CD8-positive, alpha-beta T cell (primary cell): ENCODE measurements at regions of chr2 and their contacts with region 1.

Region 1: GRCh38 chr2:86783615-86784339 is 6.9 kb downstream of the CD8A start:
- DNase-seq: peak in 4 of 9 experiments; percentile 45 to 79 (median 54)
- ATAC-seq: peak; percentile 8
- H3K4me3 ChIP-seq: no peak overlapping the region
- H3K4me3 Mint-ChIP-seq: peak overlapping the region; percentile 48
- H3K27ac ChIP-seq: peak overlapping the region; percentile 93 to 99
- H3K27ac Mint-ChIP-seq: peak overlapping the region; percentile 99
- H3K4me1 ChIP-seq: peaks cover 74% of the 10 kb centered on the region
- H3K4me1 Mint-ChIP-seq: peaks cover 74% of the 10 kb centered on the region
- H3K27me3 ChIP-seq: no peaks in the 10 kb centered on the region
- H3K27me3 Mint-ChIP-seq: no peaks in the 10 kb centered on the region
- CTCF ChIP-seq: no peak

Region 2: DNA sequence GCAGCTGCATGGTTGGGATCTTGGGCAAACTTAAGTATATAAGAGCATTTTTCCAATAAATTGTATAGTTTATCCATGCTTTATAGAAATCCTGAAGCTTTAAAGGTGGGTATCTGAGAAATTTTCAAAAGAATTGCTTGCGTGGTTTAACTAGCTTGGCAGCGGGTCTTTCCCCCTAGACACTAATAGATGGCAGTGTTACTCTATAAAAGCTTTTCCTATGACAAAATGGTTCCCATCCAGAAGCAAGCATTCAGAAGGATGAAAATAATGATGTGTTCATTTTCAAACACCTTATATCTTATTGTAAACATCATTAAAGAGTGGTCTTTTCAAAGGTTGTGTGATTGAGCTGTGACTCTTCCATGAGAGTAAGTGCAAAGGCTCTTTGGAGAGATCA is 296.7 kb before region 1 on chr2:
- CTCF ChIA-PET with region 1: no interaction called
- POLR2A ChIA-PET with region 1: no interaction called
- intact Hi-C with region 1: no loop called
- DNase-seq: peak in 2 of 9 experiments; percentile 14 to 16
- ATAC-seq: no peak
- H3K4me3 ChIP-seq: no peak overlapping the region
- H3K4me3 Mint-ChIP-seq: no peak overlapping the region
- H3K27ac ChIP-seq: no peak overlapping the region
- H3K27ac Mint-ChIP-seq: peak overlapping the region; percentile 34
- H3K4me1 ChIP-seq: no peaks in the 10 kb centered on the region
- H3K4me1 Mint-ChIP-seq: no peaks in the 10 kb centered on the region
- H3K27me3 ChIP-seq: no peaks in the 10 kb centered on the region
- H3K27me3 Mint-ChIP-seq: no peaks in the 10 kb centered on the region
- CTCF ChIP-seq: no peak

Region 3: GRCh38 chr2:86592547-86593230 is 191.1 kb before region 1 on chr2:
- CTCF ChIA-PET with region 1: no interaction called
- POLR2A ChIA-PET with region 1: no interaction called
- intact Hi-C with region 1: no loop called
- DNase-seq: no peak
- ATAC-seq: no peak
- H3K4me3 ChIP-seq: no peak overlapping the region
- H3K4me3 Mint-ChIP-seq: no peak overlapping the region
- H3K27ac ChIP-seq: no peak overlapping the region
- H3K27ac Mint-ChIP-seq: no peak overlapping the region
- H3K4me1 ChIP-seq: no peaks in the 10 kb centered on the region
- H3K4me1 Mint-ChIP-seq: no peaks in the 10 kb centered on the region
- H3K27me3 ChIP-seq: no peaks in the 10 kb centered on the region
- H3K27me3 Mint-ChIP-seq: peaks cover 6% of the 10 kb centered on the region
- CTCF ChIP-seq: no peak

Region 4: GRCh38 chr2:86769838-86770237 is 13.9 kb before region 1 on chr2:
- CTCF ChIA-PET with region 1: interaction called, 169 read pairs
- POLR2A ChIA-PET with region 1: interaction called, 17 read pairs
- intact Hi-C with region 1: loop called (anchors 1 kb)
- DNase-seq: no peak
- ATAC-seq: no peak
- H3K4me3 ChIP-seq: no peak overlapping the region
- H3K4me3 Mint-ChIP-seq: no peak overlapping the region
- H3K27ac ChIP-seq: no peak overlapping the region
- H3K27ac Mint-ChIP-seq: no peak overlapping the region
- H3K4me1 ChIP-seq: peaks cover 8% of the 10 kb centered on the region
- H3K4me1 Mint-ChIP-seq: peaks cover 30% of the 10 kb centered on the region
- H3K27me3 ChIP-seq: no peaks in the 10 kb centered on the region
- H3K27me3 Mint-ChIP-seq: no peaks in the 10 kb centered on the region
- CTCF ChIP-seq: no peak

Region 5: GRCh38 chr2:86825693-86826381 is 42.1 kb after region 1 on chr2:
- CTCF ChIA-PET with region 1: interaction called, 7 read pairs
- POLR2A ChIA-PET with region 1: interaction called, 25 read pairs
- intact Hi-C with region 1: loop called (anchors 1 kb)
- DNase-seq: peak; percentile 70 to 96 (median 82)
- ATAC-seq: peak; percentile 84
- H3K4me3 ChIP-seq: peak overlapping the region; percentile 85 to 88
- H3K4me3 Mint-ChIP-seq: peak overlapping the region; percentile 90
- H3K27ac ChIP-seq: peak overlapping the region; percentile 81 to 91
- H3K27ac Mint-ChIP-seq: peak overlapping the region; percentile 99
- H3K4me1 ChIP-seq: peaks cover 76% of the 10 kb centered on the region
- H3K4me1 Mint-ChIP-seq: peaks cover 77% of the 10 kb centered on the region
- H3K27me3 ChIP-seq: no peaks in the 10 kb centered on the region
- H3K27me3 Mint-ChIP-seq: no peaks in the 10 kb centered on the region
- CTCF ChIP-seq: no peak